ENCODE measurements at regions of chr10 and their contacts with region 1.

Region 1: DNA sequence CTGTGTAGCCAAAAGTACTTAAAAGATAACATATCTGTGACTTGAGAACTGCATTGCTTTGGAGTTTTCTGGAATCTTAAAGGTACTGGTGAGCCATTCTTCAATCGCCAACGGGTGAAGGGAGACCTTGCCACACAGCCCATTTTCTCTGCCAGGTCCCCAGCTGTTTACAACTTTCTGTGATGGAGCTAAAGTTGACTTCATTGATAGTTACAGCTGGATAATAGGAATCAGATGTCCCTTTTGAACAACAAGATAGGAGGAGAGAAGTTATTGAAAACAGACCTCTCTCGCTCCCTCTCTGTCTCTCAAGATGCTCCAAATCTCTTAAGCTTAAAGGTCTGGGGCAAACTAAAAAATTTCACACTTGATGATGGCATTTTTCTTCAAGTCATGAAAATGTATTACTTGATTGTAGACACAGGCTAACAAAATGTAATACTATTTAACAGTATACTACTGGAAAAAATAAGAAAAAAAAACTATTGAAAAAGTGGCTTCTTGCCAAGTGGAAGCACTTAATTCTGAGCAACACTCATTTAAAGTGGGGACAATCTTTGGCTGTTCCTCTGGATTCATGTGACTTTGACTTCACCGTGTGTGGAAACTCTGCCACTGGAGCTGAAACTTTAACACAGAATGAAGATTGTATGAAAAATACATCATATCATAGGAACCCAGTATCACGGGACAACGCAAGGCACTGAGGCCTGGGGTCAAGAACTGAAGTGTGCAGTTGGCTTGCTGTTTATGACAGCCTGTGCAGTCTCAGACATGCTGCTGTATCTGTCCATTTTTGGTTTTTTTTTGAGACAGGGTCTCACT is 78.4 kb upstream of the AFAP1L2 start:
- DNase-seq: no peak
- ATAC-seq: peak; percentile 19 to 55 (median 32)
- H3K4me3 ChIP-seq: no peak overlapping the region
- H3K27ac ChIP-seq: peak overlapping the region; percentile 24 to 86 (median 77)
- H3K4me1 ChIP-seq: peaks cover 15 to 95% (median 66%) of the 10 kb centered on the region in 9 donors
- H3K27me3 ChIP-seq: no peaks in the 10 kb centered on the region
- CTCF ChIP-seq: no peak

Region 2: GRCh38 chr10:114412907-114413386 is 69.7 kb before region 1 on chr10:
- intact Hi-C with region 1: no loop called
- DNase-seq: no peak
- ATAC-seq: peak; percentile 45 to 74 (median 60)
- H3K4me3 ChIP-seq: no peak overlapping the region
- H3K27ac ChIP-seq: peak overlapping the region in 7 of 10 donors; percentile 6 to 61 (median 28)
- H3K4me1 ChIP-seq: peaks cover 0 to 29% (median 14%) of the 10 kb centered on the region in 9 donors
- H3K27me3 ChIP-seq: peaks cover 0 to 3% (median 0%) of the 10 kb centered on the region in 7 donors
- CTCF ChIP-seq: no peak

Region 3: GRCh38 chr10:114519284-114519624 is 36.6 kb after region 1 on chr10:
- intact Hi-C with region 1: loop called in 2 of 10 experiments (anchors 5 kb)
- DNase-seq: no peak
- ATAC-seq: peak in 3 of 8 donors; percentile 25 to 50 (median 34)
- H3K4me3 ChIP-seq: no peak overlapping the region
- H3K27ac ChIP-seq: peak overlapping the region in 8 of 10 donors; percentile 4 to 72 (median 41)
- H3K4me1 ChIP-seq: peaks cover 19 to 100% (median 96%) of the 10 kb centered on the region in 9 donors
- H3K27me3 ChIP-seq: no peaks in the 10 kb centered on the region
- CTCF ChIP-seq: no peak

Region 4: GRCh38 chr10:114550756-114551635 is 68.3 kb after region 1 on chr10:
- intact Hi-C with region 1: no loop called
- DNase-seq: peak; percentile 59 to 80
- ATAC-seq: peak; percentile 27 to 70 (median 48)
- H3K4me3 ChIP-seq: peak overlapping the region in 6 of 10 donors; percentile 12 to 36 (median 20)
- H3K27ac ChIP-seq: peak overlapping the region; percentile 58 to 78 (median 74)
- H3K4me1 ChIP-seq: peaks cover 10 to 99% (median 70%) of the 10 kb centered on the region in 9 donors
- H3K27me3 ChIP-seq: no peaks in the 10 kb centered on the region
- CTCF ChIP-seq: peak in 8 of 9 donors; percentile 17 to 70 (median 54)

Region 5: GRCh38 chr10:116097239-116097784 is 1614.6 kb after region 1 on chr10:
- intact Hi-C with region 1: no loop called
- DNase-seq: no peak
- ATAC-seq: no peak
- H3K4me3 ChIP-seq: no peak overlapping the region
- H3K27ac ChIP-seq: no peak overlapping the region
- H3K4me1 ChIP-seq: peaks cover 0 to 4% (median 0%) of the 10 kb centered on the region in 9 donors
- H3K27me3 ChIP-seq: peaks cover 0 to 21% (median 0%) of the 10 kb centered on the region in 7 donors
- CTCF ChIP-seq: no peak

Measured in heart right ventricle (tissue), 16 donors.